A549 (cell line): ENCODE measurements at regions of chr2 and their contacts with region 1.

Region 1: GRCh38 chr2:28594289-28595108 is 98.6 kb downstream of the PLB1 start:
- DNase-seq: peak; percentile 89 to 90
- ATAC-seq: peak; percentile 59 to 86
- H3K4me3 ChIP-seq: no peak overlapping the region
- H3K27ac ChIP-seq: peak overlapping the region; percentile 69 to 80
- H3K4me1 ChIP-seq: peaks cover 28% of the 10 kb centered on the region
- CTCF ChIP-seq: peak; percentile 97
- EP300 ChIP-seq: no peak
- POLR2A ChIP-seq: no peak
- RAD21 ChIP-seq: peak; percentile 93 to 96

Region 2: GRCh38 chr2:28583899-28584553 is 10.5 kb before region 1 on chr2:
- CTCF ChIA-PET with region 1: interaction called, 155 read pairs
- POLR2A ChIA-PET with region 1: interaction called, 16 read pairs
- DNase-seq: peak; percentile 94 to 99
- ATAC-seq: peak; percentile 94
- H3K4me3 ChIP-seq: peak overlapping the region; percentile 7; the same call in 1 of the 3 replicates
- H3K27ac ChIP-seq: peak overlapping the region; percentile 94 to 97
- H3K4me1 ChIP-seq: peaks cover 41% of the 10 kb centered on the region
- CTCF ChIP-seq: no peak
- EP300 ChIP-seq: peak; percentile 85 to 87; a peak in 3 of 5 replicates
- POLR2A ChIP-seq: no peak
- RAD21 ChIP-seq: peak in 1 of 2 experiments; percentile 41; a peak in 3 of 5 replicates

Region 3: DNA sequence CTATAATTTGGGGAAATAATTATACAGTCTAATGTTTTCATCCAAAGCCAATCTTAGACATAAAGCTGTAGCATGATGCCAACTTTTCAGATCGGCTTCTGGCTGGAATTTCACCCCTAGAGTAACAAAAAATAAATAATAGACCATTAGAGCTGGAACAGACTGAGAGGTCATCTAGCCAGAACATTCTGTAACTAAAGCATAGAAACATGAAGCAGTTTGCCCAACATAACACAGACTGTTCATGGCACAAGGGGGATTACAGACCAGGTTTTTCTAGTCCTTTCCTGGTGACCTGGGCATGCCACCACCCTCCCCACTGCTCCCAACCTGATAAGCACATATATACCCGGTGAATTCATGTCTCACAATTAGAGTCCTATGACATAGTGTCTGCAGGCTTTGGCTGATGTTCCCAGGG is 40.7 kb after region 1 on chr2:
- CTCF ChIA-PET with region 1: interaction called, 10 read pairs
- POLR2A ChIA-PET with region 1: no interaction called
- DNase-seq: no peak
- ATAC-seq: no peak
- H3K4me3 ChIP-seq: no peak overlapping the region
- H3K27ac ChIP-seq: peak overlapping the region in 1 of 2 experiments; percentile 62; a peak in 1 of 6 replicates
- H3K4me1 ChIP-seq: peaks cover 14% of the 10 kb centered on the region; the same call in 2 of the 3 replicates
- CTCF ChIP-seq: no peak
- EP300 ChIP-seq: no peak
- POLR2A ChIP-seq: no peak
- RAD21 ChIP-seq: no peak

Region 4: GRCh38 chr2:28716265-28716867 is 121.9 kb after region 1 on chr2:
- CTCF ChIA-PET with region 1: interaction called, 42 read pairs
- POLR2A ChIA-PET with region 1: no interaction called
- DNase-seq: peak; percentile 76 to 83
- ATAC-seq: peak; percentile 87 to 95
- H3K4me3 ChIP-seq: no peak overlapping the region
- H3K27ac ChIP-seq: peak overlapping the region; percentile 65 to 80
- H3K4me1 ChIP-seq: peaks cover 52% of the 10 kb centered on the region
- CTCF ChIP-seq: no peak
- EP300 ChIP-seq: no peak
- POLR2A ChIP-seq: no peak
- RAD21 ChIP-seq: 0 out of 5 replicates have a peak, but pooled peaks have one; percentile 11 to 19

Region 5: GRCh38 chr2:28751252-28751955 is 156.9 kb after region 1 on chr2 and contains the start of gene PPP1CB:
- CTCF ChIA-PET with region 1: interaction called, 135 read pairs
- POLR2A ChIA-PET with region 1: interaction called, 52 read pairs
- DNase-seq: peak; percentile 88 to 98
- ATAC-seq: peak; percentile 89 to 91
- H3K4me3 ChIP-seq: peak within 1 kb of the TSS; percentile 91
- H3K27ac ChIP-seq: peak within 1 kb of the TSS; percentile 98 to 99
- H3K4me1 ChIP-seq: peaks cover 35% of the 10 kb centered on the region
- CTCF ChIP-seq: peak; percentile 29; the same call in 2 of the 3 replicates
- EP300 ChIP-seq: no peak
- POLR2A ChIP-seq: peak; percentile 95
- RAD21 ChIP-seq: peak in 1 of 2 experiments; percentile 19; a peak in 2 of 5 replicates
- polyA plus RNA-seq, gene PPP1CB: 119 and 188 TPM in 2 replicates

Region 6: DNA sequence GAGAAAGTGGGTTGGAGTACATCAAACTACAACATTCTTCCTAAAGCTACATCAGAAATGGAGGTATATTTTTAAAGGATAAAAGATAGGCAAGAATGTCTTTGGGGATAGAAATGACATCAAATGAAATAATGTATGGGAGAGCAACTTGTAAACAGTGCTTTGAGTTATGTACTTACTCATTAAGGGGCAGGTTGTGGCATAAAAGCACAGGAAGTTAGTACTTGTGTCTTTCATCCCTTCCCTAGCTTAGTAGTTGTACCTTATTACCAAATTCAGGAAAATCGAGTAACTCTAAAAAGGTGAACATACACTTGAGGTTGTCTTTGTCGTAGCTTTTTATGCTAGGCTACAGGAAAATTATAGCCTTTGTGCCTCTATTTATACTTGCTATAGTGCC is 186.0 kb after region 1 on chr2:
- CTCF ChIA-PET with region 1: interaction called, 19 read pairs
- POLR2A ChIA-PET with region 1: no interaction called
- DNase-seq: no peak
- ATAC-seq: no peak
- H3K4me3 ChIP-seq: no peak overlapping the region
- H3K27ac ChIP-seq: no peak overlapping the region
- H3K4me1 ChIP-seq: no peaks in the 10 kb centered on the region
- CTCF ChIP-seq: no peak
- EP300 ChIP-seq: no peak
- POLR2A ChIP-seq: no peak
- RAD21 ChIP-seq: no peak